Aorta (tissue), 5 donors: ENCODE measurements at regions of chr9 and their contacts with region 1.

Region 1: DNA sequence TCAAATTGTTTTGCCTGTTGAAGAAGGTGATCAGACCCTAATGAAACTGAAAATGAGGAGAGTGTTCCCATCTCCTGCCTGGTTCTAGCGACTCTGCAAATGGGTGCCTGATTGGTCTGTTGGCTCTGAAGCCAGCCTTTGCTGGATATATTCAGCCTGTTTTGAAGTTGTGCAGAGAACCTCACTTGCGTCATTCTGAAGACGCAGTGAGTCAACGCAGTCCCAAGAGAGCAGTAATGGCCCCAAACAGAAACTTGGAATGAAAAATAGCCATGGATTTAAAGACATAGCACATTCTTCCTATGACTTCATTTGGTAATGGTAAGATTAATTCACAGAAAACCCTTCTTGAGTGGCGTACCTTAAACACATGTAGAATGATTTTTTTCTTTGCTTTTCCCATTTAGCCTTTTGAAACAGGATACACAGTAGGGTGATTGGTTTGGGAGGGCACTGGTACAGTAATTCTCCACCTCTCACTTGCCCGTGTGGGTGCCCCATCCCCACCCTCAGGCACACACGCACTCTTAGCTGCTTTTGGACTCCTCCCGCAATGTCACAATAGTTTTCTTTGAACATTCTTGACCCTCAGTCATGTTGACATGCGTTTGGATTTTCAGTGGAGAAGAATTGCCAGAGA is 54.1 kb upstream of the ABL1 start:
- DNase-seq: peak; percentile 81 to 88
- ATAC-seq: peak; percentile 96
- H3K4me3 ChIP-seq: peak overlapping the region; percentile 70 to 82
- H3K27ac ChIP-seq: peak overlapping the region; percentile 98
- H3K4me1 ChIP-seq: peaks cover 3 to 4% of the 10 kb centered on the region in 2 donors
- H3K27me3 ChIP-seq: no peaks in the 10 kb centered on the region

Region 2: GRCh38 chr9:130712564-130713285 is 68.3 kb before region 1 on chr9:
- intact Hi-C with region 1: loop called in 1 of 2 experiments (anchors 5 kb)
- DNase-seq: peak; percentile 99
- ATAC-seq: peak; percentile 98
- H3K4me3 ChIP-seq: peak overlapping the region; percentile 36 to 83
- H3K27ac ChIP-seq: peak overlapping the region in 1 of 2 donors; percentile 78
- H3K4me1 ChIP-seq: peaks cover 0 to 3% of the 10 kb centered on the region in 2 donors
- H3K27me3 ChIP-seq: no peaks in the 10 kb centered on the region

Region 3: DNA sequence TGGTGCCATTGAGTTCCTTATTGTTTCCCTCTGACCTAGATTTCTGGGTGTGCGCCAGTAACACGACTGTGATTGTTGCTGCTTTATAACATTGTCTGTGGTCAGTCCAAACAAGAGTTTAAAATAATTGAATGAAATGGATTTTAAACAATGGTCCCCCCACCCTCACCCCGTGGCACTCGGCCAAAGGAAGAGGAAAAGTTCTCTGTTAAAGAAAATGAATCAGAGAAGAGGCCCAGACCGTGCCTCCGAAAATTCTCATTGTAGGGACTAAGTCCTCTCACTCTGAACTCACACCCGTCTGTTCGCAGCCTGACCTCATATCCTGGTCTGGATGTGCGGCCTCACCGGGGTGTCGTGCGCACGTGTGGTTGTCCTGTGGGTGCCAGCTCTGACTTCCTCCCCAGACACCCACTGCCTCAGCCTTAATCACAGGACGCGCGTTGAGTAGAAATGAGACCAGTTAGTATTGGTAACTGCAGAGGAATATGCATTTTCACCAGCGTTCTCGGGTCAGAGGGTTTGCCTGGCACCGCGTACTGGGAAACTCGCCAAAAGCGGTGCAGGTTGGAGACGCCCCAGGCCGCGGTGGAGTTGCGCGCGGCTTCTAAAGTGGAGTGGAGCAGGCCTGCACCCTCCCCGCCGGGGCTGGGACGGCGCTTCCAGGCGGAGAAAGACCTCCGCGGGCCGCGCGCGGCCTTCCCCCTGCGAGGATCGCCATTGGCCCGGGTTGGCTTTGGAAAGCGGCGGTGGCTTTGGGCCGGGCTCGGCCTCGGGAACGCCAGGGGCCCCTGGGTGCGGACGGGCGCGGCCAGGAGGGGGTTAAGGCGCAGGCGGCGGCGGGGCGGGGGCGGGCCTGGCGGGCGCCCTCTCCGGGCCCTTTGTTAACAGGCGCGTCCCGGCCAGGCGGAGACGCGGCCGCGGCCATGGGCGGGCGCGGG is 53.7 kb after region 1 on chr9 and contains the start of gene ABL1:
- intact Hi-C with region 1: loop called (anchors 5 kb)
- DNase-seq: peak; percentile 86 to 91
- ATAC-seq: peak; percentile 83
- H3K4me3 ChIP-seq: peak within 1 kb of the TSS; percentile 46 to 99
- H3K27ac ChIP-seq: peak within 1 kb of the TSS; percentile 91 to 95
- H3K4me1 ChIP-seq: no peaks in the 10 kb centered on the region
- H3K27me3 ChIP-seq: no peaks in the 10 kb centered on the region
- total RNA-seq, gene ABL1: 91.7 to 98.7 TPM

Region 4: GRCh38 chr9:130847327-130848217 is 66.6 kb after region 1 on chr9:
- intact Hi-C with region 1: loop called in 1 of 2 experiments (anchors 2 kb)
- DNase-seq: peak; percentile 80 to 83
- ATAC-seq: peak; percentile 91
- H3K4me3 ChIP-seq: no peak overlapping the region
- H3K27ac ChIP-seq: peak overlapping the region; percentile 78 to 92
- H3K4me1 ChIP-seq: peaks cover 2 to 8% of the 10 kb centered on the region in 2 donors
- H3K27me3 ChIP-seq: no peaks in the 10 kb centered on the region

Region 5: DNA sequence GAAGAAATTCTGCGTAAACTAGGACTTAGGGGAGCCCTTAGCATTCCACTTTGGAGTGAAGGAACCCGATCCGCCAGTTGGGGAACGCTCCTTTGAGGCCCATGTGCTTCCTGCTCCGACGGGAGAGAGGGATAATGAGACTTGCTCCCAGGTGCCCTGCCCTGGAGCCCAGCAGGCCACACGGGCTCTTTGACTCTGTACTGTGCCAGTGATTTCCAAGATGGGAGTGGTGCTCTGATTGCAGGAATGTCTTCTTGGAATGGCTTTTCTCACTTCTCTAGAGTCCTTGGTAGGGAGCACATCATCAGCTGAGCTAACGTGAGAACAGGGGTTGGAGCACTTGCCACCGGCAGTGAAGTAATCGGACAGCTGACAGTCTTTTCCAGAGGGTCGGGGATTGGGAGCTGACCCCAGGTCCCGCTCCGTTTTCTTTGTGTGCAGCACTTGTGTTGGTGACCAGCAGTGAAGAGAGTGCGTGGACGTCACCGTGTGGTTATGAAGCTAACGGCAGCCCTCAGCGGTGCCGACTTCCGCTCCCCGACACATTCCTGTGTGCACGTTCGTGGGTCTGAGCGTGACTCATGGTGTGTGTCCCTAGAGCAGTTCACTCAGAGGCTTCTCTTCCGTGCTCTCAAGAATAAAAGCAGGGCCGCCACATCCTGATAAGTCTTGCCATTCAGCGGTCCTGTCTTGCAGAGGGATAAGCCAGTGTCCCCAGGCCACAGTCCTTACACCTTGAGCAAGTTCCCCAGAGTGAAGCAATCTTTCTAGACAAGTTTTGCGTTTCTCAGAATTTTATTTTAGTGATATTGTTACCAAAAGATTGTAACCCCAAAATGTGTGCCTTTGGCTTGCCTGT is 79.7 kb after region 1 on chr9:
- intact Hi-C with region 1: loop called in 1 of 2 experiments (anchors 2 kb)
- DNase-seq: peak; percentile 92 to 94
- ATAC-seq: peak; percentile 92
- H3K4me3 ChIP-seq: no peak overlapping the region
- H3K27ac ChIP-seq: peak overlapping the region; percentile 4 to 83
- H3K4me1 ChIP-seq: peaks cover 0 to 1% of the 10 kb centered on the region in 2 donors
- H3K27me3 ChIP-seq: no peaks in the 10 kb centered on the region